CD8-positive, alpha-beta T cell (primary cell): ENCODE measurements at regions of chr15 and their contacts with region 1.

Region 1: DNA sequence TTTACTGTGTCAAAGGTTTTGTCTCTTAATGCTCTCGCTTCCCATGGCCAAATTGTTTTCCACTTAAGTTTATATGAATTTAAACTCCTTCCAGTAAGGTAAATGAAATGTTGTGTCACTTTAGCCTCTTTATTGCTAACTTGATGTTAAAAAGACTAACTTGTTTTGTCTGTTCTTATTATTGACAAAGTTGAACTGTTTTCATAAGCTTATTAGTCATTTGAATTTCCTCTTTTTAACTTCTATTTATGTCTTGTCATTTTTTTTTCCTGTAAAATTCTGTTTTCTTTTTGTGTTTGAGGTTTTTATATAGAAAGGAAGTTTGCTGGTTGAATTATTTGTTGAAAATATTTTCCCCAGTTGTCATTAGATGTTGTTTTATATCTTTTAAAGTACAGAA is 25.8 kb downstream of the FAM98B start:
- DNase-seq: no peak
- ATAC-seq: no peak
- H3K4me3 ChIP-seq: no peak overlapping the region
- H3K4me3 Mint-ChIP-seq: no peak overlapping the region
- H3K27ac ChIP-seq: no peak overlapping the region
- H3K27ac Mint-ChIP-seq: no peak overlapping the region
- H3K4me1 ChIP-seq: peaks cover 21% of the 10 kb centered on the region
- H3K4me1 Mint-ChIP-seq: peaks cover 35% of the 10 kb centered on the region
- H3K27me3 ChIP-seq: no peaks in the 10 kb centered on the region
- H3K27me3 Mint-ChIP-seq: no peaks in the 10 kb centered on the region
- CTCF ChIP-seq: no peak

Region 2: DNA sequence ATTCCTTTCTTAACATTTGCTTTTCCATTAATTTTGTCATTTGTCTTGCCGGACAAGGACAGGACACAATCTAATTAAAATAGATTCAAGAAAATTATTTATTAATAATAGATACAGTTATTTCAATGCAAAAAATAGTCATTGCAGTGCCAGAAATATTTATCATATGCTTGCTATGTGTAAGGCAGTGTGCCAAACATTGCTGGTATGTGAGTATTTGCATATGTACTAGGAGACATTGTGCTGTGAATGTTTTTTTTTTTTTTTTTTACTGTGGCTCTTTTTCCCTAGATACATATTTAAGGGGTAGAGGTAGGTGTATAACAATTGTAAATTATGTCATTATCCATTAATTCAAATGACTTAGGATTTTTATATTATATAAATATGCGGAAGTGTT is 203.8 kb before region 1 on chr15:
- CTCF ChIA-PET with region 1: no interaction called
- POLR2A ChIA-PET with region 1: no interaction called
- intact Hi-C with region 1: no loop called
- DNase-seq: no peak
- ATAC-seq: no peak
- H3K4me3 ChIP-seq: no peak overlapping the region
- H3K4me3 Mint-ChIP-seq: no peak overlapping the region
- H3K27ac ChIP-seq: no peak overlapping the region
- H3K27ac Mint-ChIP-seq: no peak overlapping the region
- H3K4me1 ChIP-seq: no peaks in the 10 kb centered on the region
- H3K4me1 Mint-ChIP-seq: peaks cover 8% of the 10 kb centered on the region
- H3K27me3 ChIP-seq: no peaks in the 10 kb centered on the region
- H3K27me3 Mint-ChIP-seq: peaks cover 7% of the 10 kb centered on the region
- CTCF ChIP-seq: no peak

Region 3: GRCh38 chr15:38297623-38298388 is 181.9 kb before region 1 on chr15:
- CTCF ChIA-PET with region 1: no interaction called
- POLR2A ChIA-PET with region 1: no interaction called
- intact Hi-C with region 1: no loop called
- DNase-seq: no peak
- ATAC-seq: no peak
- H3K4me3 ChIP-seq: no peak overlapping the region
- H3K4me3 Mint-ChIP-seq: no peak overlapping the region
- H3K27ac ChIP-seq: no peak overlapping the region
- H3K27ac Mint-ChIP-seq: no peak overlapping the region
- H3K4me1 ChIP-seq: no peaks in the 10 kb centered on the region
- H3K4me1 Mint-ChIP-seq: peaks cover 4% of the 10 kb centered on the region
- H3K27me3 ChIP-seq: no peaks in the 10 kb centered on the region
- H3K27me3 Mint-ChIP-seq: no peaks in the 10 kb centered on the region
- CTCF ChIP-seq: no peak

Region 4: DNA sequence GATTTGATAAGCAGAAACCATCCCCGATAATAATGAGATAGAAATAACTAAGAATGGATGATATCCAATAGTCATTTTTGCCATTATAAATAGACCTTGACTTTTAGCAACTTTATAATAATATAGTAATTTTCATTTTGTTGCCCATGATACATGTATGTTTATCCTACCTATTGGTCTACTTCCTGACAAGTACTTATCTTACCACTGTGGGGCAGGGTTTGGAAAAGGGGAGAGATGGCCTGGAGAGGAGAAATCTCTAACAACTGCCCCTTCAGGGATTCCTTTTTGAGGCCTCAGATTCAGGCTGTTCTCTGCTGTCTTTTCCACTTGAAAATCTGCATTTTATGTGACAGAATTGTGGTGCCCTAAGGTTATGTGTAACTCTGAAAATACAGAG is 16.4 kb after region 1 on chr15:
- CTCF ChIA-PET with region 1: interaction called, 5 read pairs
- POLR2A ChIA-PET with region 1: no interaction called
- intact Hi-C with region 1: loop called in 1 of 2 experiments (anchors 2 kb)
- DNase-seq: no peak
- ATAC-seq: no peak
- H3K4me3 ChIP-seq: no peak overlapping the region
- H3K4me3 Mint-ChIP-seq: no peak overlapping the region
- H3K27ac ChIP-seq: peak overlapping the region in 1 of 2 experiments; percentile 11
- H3K27ac Mint-ChIP-seq: peak overlapping the region; percentile 69
- H3K4me1 ChIP-seq: no peaks in the 10 kb centered on the region
- H3K4me1 Mint-ChIP-seq: peaks cover 15% of the 10 kb centered on the region
- H3K27me3 ChIP-seq: no peaks in the 10 kb centered on the region
- H3K27me3 Mint-ChIP-seq: no peaks in the 10 kb centered on the region
- CTCF ChIP-seq: no peak